Esophagus muscularis mucosa (tissue), 4 donors: ENCODE measurements at regions of chr17 and their contacts with region 1.

Region 1: GRCh38 chr17:80981062-80981902 is 10.4 kb upstream of the CHMP6 start:
- DNase-seq: no peak
- H3K4me3 ChIP-seq: peak overlapping the region; percentile 28 to 44 (median 43)
- H3K27ac ChIP-seq: no peak overlapping the region
- H3K4me1 ChIP-seq: peaks cover 7 to 39% (median 31%) of the 10 kb centered on the region in 4 donors
- H3K27me3 ChIP-seq: peaks cover 0 to 9% (median 1%) of the 10 kb centered on the region in 4 donors
- CTCF ChIP-seq: peak; percentile 90 to 96 (median 93)
- EP300 ChIP-seq: no peak
- POLR2A ChIP-seq: no peak

Region 2: DNA sequence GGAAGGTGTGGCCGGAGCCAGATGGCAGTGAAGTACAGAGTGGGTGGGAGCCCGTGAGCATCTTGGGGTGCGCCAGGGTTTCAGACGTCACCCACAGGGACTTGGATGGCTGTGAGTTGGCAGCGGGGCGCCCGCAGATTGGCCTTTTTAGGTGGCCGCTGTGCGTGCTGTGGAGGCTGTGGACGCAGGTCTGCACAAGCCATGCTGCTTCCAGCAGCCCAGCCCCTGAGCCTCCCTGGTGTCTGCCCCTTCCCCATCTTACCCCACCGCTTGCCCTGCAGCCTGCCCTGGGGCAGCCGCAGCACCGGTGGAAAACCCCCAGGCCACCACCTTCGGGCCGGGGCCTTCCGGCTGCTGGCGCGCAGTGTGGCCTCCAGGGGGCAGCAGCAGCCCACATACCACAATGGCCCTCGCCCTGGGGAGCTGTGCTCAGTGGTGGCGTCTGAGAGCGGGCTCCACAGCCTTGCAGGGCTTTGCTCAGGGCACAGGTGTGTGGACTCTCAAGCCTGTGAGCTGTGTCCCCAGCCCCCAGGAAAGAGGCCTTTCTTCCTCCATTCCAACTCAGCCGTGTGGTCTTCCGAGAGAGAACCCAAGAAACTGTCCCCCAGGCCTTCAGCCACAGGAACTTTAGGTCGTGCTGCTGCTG is 554.5 kb before region 1 on chr17:
- intact Hi-C with region 1: loop called (anchors 5 kb)
- DNase-seq: no peak
- H3K4me3 ChIP-seq: no peak overlapping the region
- H3K27ac ChIP-seq: no peak overlapping the region
- H3K4me1 ChIP-seq: peaks cover 8 to 22% (median 9%) of the 10 kb centered on the region in 4 donors
- H3K27me3 ChIP-seq: no peaks in the 10 kb centered on the region
- CTCF ChIP-seq: peak in 2 of 3 experiments; percentile 97
- EP300 ChIP-seq: no peak
- POLR2A ChIP-seq: no peak

Region 3: GRCh38 chr17:80575057-80575875 is 406.0 kb before region 1 on chr17:
- intact Hi-C with region 1: loop called (anchors 10 kb)
- DNase-seq: no peak
- H3K4me3 ChIP-seq: no peak overlapping the region
- H3K27ac ChIP-seq: no peak overlapping the region
- H3K4me1 ChIP-seq: peaks cover 0 to 8% (median 2%) of the 10 kb centered on the region in 4 donors
- H3K27me3 ChIP-seq: no peaks in the 10 kb centered on the region
- CTCF ChIP-seq: peak; percentile 97 to 98 (median 98)
- EP300 ChIP-seq: no peak
- POLR2A ChIP-seq: peak; percentile 1

Region 4: GRCh38 chr17:80866147-80866793 is 115.0 kb before region 1 on chr17:
- intact Hi-C with region 1: loop called (anchors 2 kb)
- DNase-seq: no peak
- H3K4me3 ChIP-seq: no peak overlapping the region
- H3K27ac ChIP-seq: no peak overlapping the region
- H3K4me1 ChIP-seq: peaks cover 2 to 13% (median 5%) of the 10 kb centered on the region in 4 donors
- H3K27me3 ChIP-seq: no peaks in the 10 kb centered on the region
- CTCF ChIP-seq: peak; percentile 73 to 85 (median 81)
- EP300 ChIP-seq: no peak
- POLR2A ChIP-seq: no peak